MCF 10A (cell line): ENCODE measurements at regions of chr15 and their contacts with region 1.

Region 1: DNA sequence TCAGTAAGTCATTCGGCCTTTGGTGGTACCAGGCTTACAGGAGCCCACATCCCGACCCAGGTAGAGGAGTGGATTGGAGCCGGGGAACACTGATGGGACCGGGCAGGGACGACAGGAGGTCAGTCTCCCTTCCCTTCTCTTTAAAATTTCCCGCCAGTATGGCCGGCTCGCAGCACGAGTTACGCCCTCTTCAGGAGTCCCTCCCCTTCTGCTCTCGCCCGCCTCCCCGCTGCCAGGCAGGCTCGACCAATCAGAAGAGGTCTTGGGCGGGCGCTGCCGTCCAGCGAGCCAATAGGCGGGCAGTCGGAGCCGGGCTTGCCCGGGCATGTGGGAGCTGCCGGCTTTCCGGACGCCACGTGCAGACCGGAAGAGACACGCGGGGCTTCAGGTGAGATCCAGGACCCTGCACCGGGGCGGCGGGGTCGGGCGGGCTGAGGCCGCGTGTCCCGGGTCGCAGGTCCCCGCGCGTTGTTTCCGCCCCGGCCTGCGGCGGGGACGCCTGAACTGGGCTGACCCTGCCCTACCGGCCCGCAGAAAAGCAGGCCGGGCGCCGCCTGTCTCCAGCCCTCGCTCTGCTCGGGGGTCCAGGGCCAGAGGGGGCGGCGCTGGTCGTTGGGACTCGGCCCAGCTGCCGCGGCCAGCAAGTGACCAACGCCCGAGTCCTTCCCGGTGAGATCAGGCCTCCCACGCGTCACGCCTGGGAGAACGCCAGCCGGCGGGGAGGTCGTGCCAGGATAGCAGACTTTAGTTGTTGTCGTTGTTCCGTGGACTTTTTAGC is at the start of gene AEN:
- DNase-seq: peak; percentile 95
- H3K4me3 Mint-ChIP-seq: peak within 1 kb of the TSS; percentile 87
- H3K27ac Mint-ChIP-seq: peak within 1 kb of the TSS; percentile 81
- H3K4me1 Mint-ChIP-seq: peaks cover 25% of the 10 kb centered on the region
- H3K27me3 Mint-ChIP-seq: no peaks in the 10 kb centered on the region
- CTCF ChIP-seq: no peak
- total RNA-seq, gene AEN: 48.7 and 67.6 TPM in 2 replicates

Region 2: DNA sequence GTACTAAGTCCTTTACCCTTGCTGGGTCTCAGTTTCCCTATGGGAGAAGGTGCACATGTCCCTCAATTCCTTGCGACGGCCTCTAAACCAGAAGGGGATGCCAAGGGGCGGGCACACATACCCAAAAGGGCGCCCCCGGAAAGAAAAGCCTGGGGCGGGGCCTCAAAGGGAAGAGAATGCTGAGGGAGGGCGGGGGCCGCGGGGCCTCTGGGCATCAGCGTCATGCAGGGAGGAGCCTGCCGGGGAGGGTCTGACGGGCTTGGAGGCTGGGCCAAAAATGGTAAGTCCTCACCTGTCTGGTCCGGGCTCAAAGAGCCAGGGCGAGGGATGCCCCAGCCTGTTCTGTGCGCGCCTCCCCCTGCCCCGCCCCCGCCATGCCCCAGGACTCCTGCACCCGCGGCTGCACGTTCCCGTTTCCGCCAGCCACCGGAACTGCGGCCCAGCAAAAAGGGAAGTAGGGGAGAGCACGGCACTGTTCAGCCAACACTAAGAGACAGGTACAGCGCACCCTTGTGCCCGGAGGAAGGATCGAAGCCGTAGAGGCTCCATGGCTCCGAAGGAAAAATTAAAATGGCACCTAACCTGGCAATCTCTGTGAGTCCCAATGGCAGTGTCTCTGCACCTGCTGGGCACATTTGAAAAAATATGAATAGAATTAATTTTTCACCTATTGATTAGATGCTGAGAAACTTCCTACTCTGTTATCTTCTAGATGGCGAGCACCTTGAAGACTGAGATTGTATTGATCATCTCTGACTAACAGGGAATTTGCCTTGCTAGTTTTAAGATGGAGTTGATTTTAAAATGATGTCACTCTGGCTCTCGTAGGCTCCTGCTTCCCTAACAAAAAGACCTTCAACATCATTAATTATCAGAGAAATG is 74.7 kb before region 1 on chr15 and contains the start of gene DET1:
- CTCF ChIA-PET with region 1: no interaction called
- POLR2A ChIA-PET with region 1: no interaction called
- intact Hi-C with region 1: loop called (anchors 5 kb)
- DNase-seq: peak; percentile 96
- H3K4me3 Mint-ChIP-seq: peak within 1 kb of the TSS; percentile 79
- H3K27ac Mint-ChIP-seq: peak within 1 kb of the TSS; percentile 78
- H3K4me1 Mint-ChIP-seq: no peaks in the 10 kb centered on the region
- H3K27me3 Mint-ChIP-seq: no peaks in the 10 kb centered on the region
- CTCF ChIP-seq: peak; percentile 45
- total RNA-seq, gene DET1: 5.1 and 7.6 TPM in 2 replicates

Region 3: DNA sequence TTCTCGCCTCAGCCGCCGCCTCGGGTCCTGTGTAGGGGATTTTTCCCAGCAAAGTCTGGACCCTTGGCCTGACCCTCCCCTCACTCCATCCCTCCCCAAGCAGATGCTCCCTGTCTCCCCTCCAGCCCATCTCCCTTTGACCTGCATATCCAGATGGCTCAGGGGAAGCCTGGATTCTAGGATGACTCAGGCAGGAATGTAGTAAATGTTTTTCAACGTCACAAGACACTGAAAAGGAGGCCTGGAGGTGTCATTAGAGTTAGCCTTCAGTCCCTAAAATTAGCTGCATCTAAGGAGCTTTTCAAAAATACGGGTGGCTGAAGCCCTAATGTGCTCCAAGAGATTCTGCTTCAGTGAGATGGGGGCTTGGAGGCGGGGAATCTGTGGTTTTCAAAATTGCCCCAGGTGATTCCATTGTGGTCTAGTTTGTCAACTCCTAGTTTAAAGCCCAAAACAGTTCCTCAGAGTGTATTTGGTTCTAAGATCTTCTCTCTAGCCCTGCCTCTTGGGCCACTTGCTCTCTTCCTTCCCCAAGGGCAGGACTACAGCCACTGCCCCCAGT is 189.3 kb after region 1 on chr15:
- CTCF ChIA-PET with region 1: no interaction called
- POLR2A ChIA-PET with region 1: no interaction called
- intact Hi-C with region 1: no loop called
- DNase-seq: peak; percentile 16
- H3K4me3 Mint-ChIP-seq: no peak overlapping the region
- H3K27ac Mint-ChIP-seq: no peak overlapping the region
- H3K4me1 Mint-ChIP-seq: peaks cover 8% of the 10 kb centered on the region
- H3K27me3 Mint-ChIP-seq: peaks cover 3% of the 10 kb centered on the region
- CTCF ChIP-seq: no peak